Breast epithelium (tissue), 4 donors: ENCODE measurements at regions of chr5 and their contacts with region 1.

Region 1: GRCh38 chr5:152097128-152097527 is 172.5 kb upstream of the GLRA1 start:
- DNase-seq: no peak
- H3K4me3 ChIP-seq: no peak overlapping the region
- H3K27ac ChIP-seq: no peak overlapping the region
- H3K4me1 ChIP-seq: no peaks in the 10 kb centered on the region
- H3K27me3 ChIP-seq: no peaks in the 10 kb centered on the region
- CTCF ChIP-seq: no peak
- POLR2A ChIP-seq: no peak

Region 2: DNA sequence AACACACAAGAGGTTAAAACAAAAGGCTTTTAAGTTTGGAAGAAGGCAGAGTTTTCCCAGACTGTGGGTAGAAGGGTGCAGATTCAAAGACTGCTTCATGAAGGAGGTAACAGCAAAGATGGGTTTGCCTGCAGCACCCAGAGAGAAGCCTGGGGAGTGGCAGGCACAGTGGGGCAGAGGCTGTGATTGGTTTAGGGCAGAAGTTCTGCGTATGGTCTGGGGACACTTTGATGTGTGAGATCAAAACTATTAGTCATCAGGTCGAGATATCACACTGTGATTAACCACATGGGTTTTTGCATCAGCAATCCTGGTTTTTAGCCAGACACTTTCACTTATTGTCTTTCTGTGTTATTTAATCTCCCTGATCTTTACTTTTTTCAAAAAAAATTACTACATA is 16.3 kb after region 1 on chr5:
- intact Hi-C with region 1: loop called (anchors 1 kb)
- DNase-seq: no peak
- H3K4me3 ChIP-seq: no peak overlapping the region
- H3K27ac ChIP-seq: no peak overlapping the region
- H3K4me1 ChIP-seq: no peaks in the 10 kb centered on the region
- H3K27me3 ChIP-seq: no peaks in the 10 kb centered on the region
- CTCF ChIP-seq: no peak
- POLR2A ChIP-seq: no peak